Natural killer cell (primary cell): ENCODE measurements at regions of chr13 and their contacts with region 1.

Region 1: DNA sequence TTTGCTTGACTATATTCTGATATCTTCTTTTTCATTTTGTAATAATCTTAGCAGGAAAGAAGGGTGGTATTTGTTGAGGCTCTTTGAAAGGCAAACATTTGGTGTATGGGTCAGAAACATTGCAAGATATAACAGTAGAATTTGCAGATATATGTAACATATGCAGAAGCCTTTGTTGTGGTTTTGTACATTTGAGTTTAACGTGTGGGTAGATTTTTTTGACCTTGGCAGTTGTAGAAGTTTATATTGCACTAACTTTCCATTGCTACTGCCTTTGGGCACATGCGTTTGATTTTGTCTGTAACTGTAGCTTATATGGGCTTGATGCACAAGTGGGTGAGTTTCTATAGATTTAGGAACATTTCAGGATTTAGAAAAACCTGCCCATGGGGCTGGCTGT is 78.5 kb upstream of the SPRY2 start:
- DNase-seq: no peak
- ATAC-seq: no peak
- H3K4me3 ChIP-seq: no peak overlapping the region
- H3K4me3 Mint-ChIP-seq: no peak overlapping the region
- H3K27ac ChIP-seq: no peak overlapping the region
- H3K27ac Mint-ChIP-seq: peak overlapping the region in 1 of 2 donors; percentile 7
- H3K4me1 ChIP-seq: peaks cover 4% of the 10 kb centered on the region
- H3K4me1 Mint-ChIP-seq: peaks cover 26 to 43% of the 10 kb centered on the region in 2 donors
- H3K27me3 ChIP-seq: no peaks in the 10 kb centered on the region
- H3K27me3 Mint-ChIP-seq: no peaks in the 10 kb centered on the region
- CTCF ChIP-seq: no peak

Region 2: DNA sequence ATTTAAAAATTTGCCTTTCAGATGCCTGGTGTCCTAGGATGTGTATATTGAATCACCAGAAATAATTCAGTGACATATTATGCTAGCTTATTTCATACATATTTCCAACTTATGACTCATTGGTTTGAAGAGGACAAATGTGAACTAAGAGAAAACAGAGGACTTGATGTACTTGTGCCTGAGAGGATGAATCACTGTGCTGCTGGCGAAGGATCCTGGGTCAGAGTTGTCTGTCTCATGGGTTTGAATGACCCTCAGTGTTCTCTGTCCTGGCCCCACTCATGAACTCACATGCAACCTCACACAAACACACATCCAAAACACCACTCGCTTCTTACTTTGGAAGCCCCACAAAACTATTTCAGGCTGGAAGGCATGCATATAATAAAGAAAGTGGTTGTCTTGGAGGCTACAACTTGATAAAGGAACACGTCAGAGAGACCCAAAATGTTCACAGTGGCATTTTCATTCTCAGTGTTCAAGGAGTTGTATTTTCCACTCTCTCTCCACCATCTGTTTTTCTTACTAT is 50.5 kb after region 1 on chr13:
- intact Hi-C with region 1: loop called (anchors 10 kb)
- DNase-seq: no peak
- ATAC-seq: no peak
- H3K4me3 ChIP-seq: no peak overlapping the region
- H3K4me3 Mint-ChIP-seq: no peak overlapping the region
- H3K27ac ChIP-seq: no peak overlapping the region
- H3K27ac Mint-ChIP-seq: no peak overlapping the region
- H3K4me1 ChIP-seq: no peaks in the 10 kb centered on the region
- H3K4me1 Mint-ChIP-seq: peaks cover 5 to 9% of the 10 kb centered on the region in 2 donors
- H3K27me3 ChIP-seq: no peaks in the 10 kb centered on the region
- H3K27me3 Mint-ChIP-seq: peaks cover 0 to 14% of the 10 kb centered on the region in 2 donors
- CTCF ChIP-seq: no peak